ENCODE measurements at regions of chr3 and their contacts with region 1.

Region 1: DNA sequence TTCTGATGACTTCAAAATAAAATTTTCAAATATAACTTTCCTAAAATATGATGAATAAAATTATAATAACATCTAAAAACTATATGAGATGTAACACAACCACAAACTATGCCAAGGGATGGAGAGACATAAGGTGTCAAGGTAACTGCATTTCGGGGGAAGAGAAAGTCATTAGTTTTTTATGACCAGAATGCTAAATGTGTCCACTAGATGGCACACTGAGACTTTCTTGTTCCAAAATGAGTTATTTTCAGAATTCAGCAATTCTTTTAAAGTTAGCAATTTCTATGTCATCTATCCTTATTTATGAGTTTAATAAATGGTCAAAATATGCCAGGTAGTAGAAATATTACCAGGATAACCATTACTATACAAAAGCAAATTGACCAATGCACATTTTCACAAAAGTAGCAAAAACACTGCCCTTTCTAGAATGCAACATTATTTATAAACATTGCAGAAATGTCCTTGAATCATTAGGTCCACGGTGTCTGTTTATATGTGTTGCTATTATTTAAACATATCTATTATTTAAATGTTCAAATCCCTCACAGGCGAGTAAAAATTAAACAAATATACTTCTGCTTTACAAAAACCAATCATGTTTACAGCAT is 374.2 kb downstream of the PLCL2 start:
- DNase-seq: peak in 7 of 9 donors; percentile 7 to 53 (median 36)
- ATAC-seq: no peak
- H3K4me3 ChIP-seq: no peak overlapping the region
- H3K4me3 Mint-ChIP-seq: no peak overlapping the region
- H3K27ac ChIP-seq: no peak overlapping the region
- H3K27ac Mint-ChIP-seq: no peak overlapping the region
- H3K4me1 ChIP-seq: no peaks in the 10 kb centered on the region
- H3K4me1 Mint-ChIP-seq: peaks cover 0 to 2% (median 0%) of the 10 kb centered on the region in 7 donors
- H3K27me3 ChIP-seq: no peaks in the 10 kb centered on the region
- H3K27me3 Mint-ChIP-seq: no peaks in the 10 kb centered on the region

Region 2: DNA sequence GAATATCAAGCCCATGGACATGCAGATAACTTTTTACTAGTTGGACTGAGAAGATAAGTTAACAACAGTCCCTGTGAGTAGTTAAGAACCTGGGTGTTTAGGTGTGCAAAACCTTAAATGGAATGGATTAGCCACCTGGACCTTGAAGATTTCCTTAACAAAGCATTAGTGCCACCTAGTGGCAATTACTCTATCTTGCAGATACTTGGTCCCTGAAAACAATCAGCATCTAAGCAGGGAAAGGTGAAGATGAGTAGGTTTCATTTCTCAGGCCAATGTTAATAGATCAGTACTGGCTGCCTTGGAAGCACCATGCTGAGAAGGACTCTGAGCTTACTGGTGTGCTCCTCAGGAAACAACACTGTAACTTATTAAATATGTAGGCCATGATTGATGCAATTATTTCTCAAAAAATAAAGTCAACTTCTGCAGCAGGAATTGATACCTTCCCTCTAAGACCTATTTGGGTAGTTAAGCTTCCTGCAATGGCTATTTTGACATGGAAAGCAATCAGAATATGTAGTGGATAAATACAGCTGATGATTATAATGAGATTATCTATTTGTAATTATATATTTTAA is 154.1 kb after region 1 on chr3:
- CTCF ChIA-PET with region 1: interaction called, 6 read pairs
- POLR2A ChIA-PET with region 1: no interaction called
- intact Hi-C with region 1: loop called (anchors 1 kb)
- DNase-seq: peak in 6 of 9 donors; percentile 21 to 53 (median 41)
- ATAC-seq: peak; percentile 69
- H3K4me3 ChIP-seq: no peak overlapping the region
- H3K4me3 Mint-ChIP-seq: no peak overlapping the region
- H3K27ac ChIP-seq: no peak overlapping the region
- H3K27ac Mint-ChIP-seq: peak overlapping the region in 1 of 9 donors; percentile 51
- H3K4me1 ChIP-seq: no peaks in the 10 kb centered on the region
- H3K4me1 Mint-ChIP-seq: no peaks in the 10 kb centered on the region
- H3K27me3 ChIP-seq: no peaks in the 10 kb centered on the region
- H3K27me3 Mint-ChIP-seq: no peaks in the 10 kb centered on the region

Region 3: GRCh38 chr3:17841190-17841828 is 582.4 kb after region 1 on chr3:
- CTCF ChIA-PET with region 1: interaction called, 8 read pairs
- POLR2A ChIA-PET with region 1: no interaction called
- intact Hi-C with region 1: loop called (anchors 1 kb)
- DNase-seq: peak; percentile 35 to 73 (median 57)
- ATAC-seq: peak; percentile 89
- H3K4me3 ChIP-seq: no peak overlapping the region
- H3K4me3 Mint-ChIP-seq: no peak overlapping the region
- H3K27ac ChIP-seq: no peak overlapping the region
- H3K27ac Mint-ChIP-seq: no peak overlapping the region
- H3K4me1 ChIP-seq: no peaks in the 10 kb centered on the region
- H3K4me1 Mint-ChIP-seq: peaks cover 0 to 2% (median 0%) of the 10 kb centered on the region in 7 donors
- H3K27me3 ChIP-seq: no peaks in the 10 kb centered on the region
- H3K27me3 Mint-ChIP-seq: peaks cover 0 to 8% (median 6%) of the 10 kb centered on the region in 5 donors

Region 4: GRCh38 chr3:17979252-17979651 is 720.3 kb after region 1 on chr3:
- CTCF ChIA-PET with region 1: no interaction called
- POLR2A ChIA-PET with region 1: no interaction called
- intact Hi-C with region 1: loop called in 1 of 2 experiments (anchors 2 kb)
- DNase-seq: no peak
- ATAC-seq: no peak
- H3K4me3 ChIP-seq: no peak overlapping the region
- H3K4me3 Mint-ChIP-seq: no peak overlapping the region
- H3K27ac ChIP-seq: no peak overlapping the region
- H3K27ac Mint-ChIP-seq: no peak overlapping the region
- H3K4me1 ChIP-seq: no peaks in the 10 kb centered on the region
- H3K4me1 Mint-ChIP-seq: no peaks in the 10 kb centered on the region
- H3K27me3 ChIP-seq: no peaks in the 10 kb centered on the region
- H3K27me3 Mint-ChIP-seq: peaks cover 0 to 26% (median 13%) of the 10 kb centered on the region in 5 donors

Region 5: GRCh38 chr3:19030522-19030839 is 1771.6 kb after region 1 on chr3:
- CTCF ChIA-PET with region 1: no interaction called
- POLR2A ChIA-PET with region 1: no interaction called
- intact Hi-C with region 1: loop called in 1 of 2 experiments (anchors 1 kb)
- DNase-seq: peak in 5 of 9 donors; percentile 5 to 36 (median 18)
- ATAC-seq: peak; percentile 22
- H3K4me3 ChIP-seq: no peak overlapping the region
- H3K4me3 Mint-ChIP-seq: no peak overlapping the region
- H3K27ac ChIP-seq: no peak overlapping the region
- H3K27ac Mint-ChIP-seq: no peak overlapping the region
- H3K4me1 ChIP-seq: no peaks in the 10 kb centered on the region
- H3K4me1 Mint-ChIP-seq: peaks cover 0 to 7% (median 0%) of the 10 kb centered on the region in 7 donors
- H3K27me3 ChIP-seq: no peaks in the 10 kb centered on the region
- H3K27me3 Mint-ChIP-seq: peaks cover 12 to 34% (median 20%) of the 10 kb centered on the region in 5 donors

Measured in naive thymus-derived CD4-positive, alpha-beta T cell (primary cell).